ENCODE measurements at regions of chr1 and their contacts with region 1.

Region 1: GRCh38 chr1:205300886-205301821 is 20.4 kb downstream of the NUAK2 start:
- DNase-seq: peak; percentile 81
- H3K4me3 ChIP-seq: peak overlapping the region in 1 of 3 experiments; percentile 14
- H3K27ac ChIP-seq: peak overlapping the region; percentile 46
- H3K4me1 ChIP-seq: peaks cover 49% of the 10 kb centered on the region
- H3K27me3 ChIP-seq: no peaks in the 10 kb centered on the region
- CTCF ChIP-seq: no peak

Region 2: DNA sequence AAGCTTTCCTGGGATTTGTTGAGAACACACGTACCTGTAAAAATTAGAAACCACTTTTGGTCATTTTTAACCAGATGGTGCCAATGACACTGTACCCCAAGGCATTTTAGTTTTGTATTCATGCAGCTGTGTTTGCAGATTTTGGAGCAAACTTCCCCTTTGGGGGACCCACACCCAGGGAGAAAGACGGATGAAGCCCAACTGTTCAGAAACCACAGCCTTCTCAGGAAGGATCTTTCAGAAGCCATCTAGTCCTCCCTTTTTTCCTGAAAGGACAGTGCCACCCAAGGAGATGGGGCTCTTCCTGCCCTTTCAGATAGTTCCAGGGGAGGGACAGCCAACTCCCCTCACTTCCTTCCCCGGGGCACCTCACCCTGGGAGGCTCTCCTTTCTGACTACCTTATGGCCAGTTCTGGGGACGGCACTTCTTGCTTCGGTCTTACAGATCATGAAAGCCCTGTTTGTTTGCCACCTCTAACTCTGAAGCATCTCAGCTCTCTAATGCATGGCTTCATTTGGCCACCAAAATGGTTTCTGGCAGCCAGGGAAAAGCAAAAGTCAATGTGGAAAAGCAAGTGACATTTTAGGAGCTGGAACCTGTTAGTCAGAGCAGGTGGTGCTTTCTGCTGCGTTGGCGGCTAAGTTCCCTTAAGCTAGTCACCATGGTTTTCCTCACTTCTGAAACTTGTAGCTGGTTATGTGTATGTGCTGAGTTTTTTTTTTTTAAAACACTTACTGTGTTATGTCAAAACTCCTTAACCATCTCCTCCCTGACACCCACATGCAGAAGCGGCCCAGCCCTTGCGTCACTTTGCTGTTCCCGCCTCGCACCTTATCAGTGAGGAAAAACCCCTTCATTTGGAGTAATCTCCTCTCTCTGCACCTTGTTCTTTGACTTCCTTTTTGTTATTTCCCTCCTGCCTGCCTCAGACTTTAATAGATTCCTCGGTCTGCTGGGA is 63.3 kb before region 1 on chr1:
- CTCF ChIA-PET with region 1: no interaction called
- dilution Hi-C with region 1: no loop called
- in situ Hi-C with region 1: no loop called
- intact Hi-C with region 1: no loop called
- DNase-seq: no peak
- H3K4me3 ChIP-seq: no peak overlapping the region
- H3K27ac ChIP-seq: no peak overlapping the region
- H3K4me1 ChIP-seq: no peaks in the 10 kb centered on the region
- H3K27me3 ChIP-seq: no peaks in the 10 kb centered on the region
- CTCF ChIP-seq: no peak

Region 3: DNA sequence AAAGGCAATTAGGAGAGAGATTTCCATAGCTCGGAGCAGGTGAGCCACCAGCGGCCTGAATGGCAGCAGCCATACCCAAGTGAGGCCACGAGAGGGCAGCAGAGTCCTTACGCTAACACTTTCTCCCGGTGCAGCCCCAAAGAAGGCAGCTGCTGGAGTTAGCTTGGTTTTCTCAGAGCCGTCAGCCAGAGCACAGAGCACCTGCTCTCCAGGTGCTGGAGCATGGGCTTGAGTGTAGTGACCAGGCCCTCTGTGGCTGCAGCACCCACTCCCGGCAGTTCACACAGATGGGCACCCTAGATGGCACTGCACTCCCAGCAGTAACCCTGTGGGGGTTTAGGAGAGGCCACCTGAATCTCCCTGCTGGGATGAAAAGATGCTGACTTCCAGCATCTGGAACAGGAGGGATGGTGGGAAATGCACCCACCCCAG is 27.6 kb before region 1 on chr1:
- CTCF ChIA-PET with region 1: interaction called, 5 read pairs
- dilution Hi-C with region 1: no loop called
- in situ Hi-C with region 1: no loop called
- intact Hi-C with region 1: loop called (anchors 1 kb)
- DNase-seq: peak; percentile 65
- H3K4me3 ChIP-seq: no peak overlapping the region
- H3K27ac ChIP-seq: no peak overlapping the region
- H3K4me1 ChIP-seq: peaks cover 29% of the 10 kb centered on the region
- H3K27me3 ChIP-seq: no peaks in the 10 kb centered on the region
- CTCF ChIP-seq: peak; percentile 99

Region 4: GRCh38 chr1:205284343-205285144 is 16.6 kb before region 1 on chr1:
- CTCF ChIA-PET with region 1: no interaction called
- dilution Hi-C with region 1: no loop called
- in situ Hi-C with region 1: no loop called
- intact Hi-C with region 1: loop called (anchors 1 kb)
- DNase-seq: peak; percentile 100
- H3K4me3 ChIP-seq: no peak overlapping the region
- H3K27ac ChIP-seq: peak overlapping the region; percentile 26
- H3K4me1 ChIP-seq: peaks cover 48% of the 10 kb centered on the region
- H3K27me3 ChIP-seq: no peaks in the 10 kb centered on the region
- CTCF ChIP-seq: peak in 1 of 2 donors; percentile 25

Region 5: DNA sequence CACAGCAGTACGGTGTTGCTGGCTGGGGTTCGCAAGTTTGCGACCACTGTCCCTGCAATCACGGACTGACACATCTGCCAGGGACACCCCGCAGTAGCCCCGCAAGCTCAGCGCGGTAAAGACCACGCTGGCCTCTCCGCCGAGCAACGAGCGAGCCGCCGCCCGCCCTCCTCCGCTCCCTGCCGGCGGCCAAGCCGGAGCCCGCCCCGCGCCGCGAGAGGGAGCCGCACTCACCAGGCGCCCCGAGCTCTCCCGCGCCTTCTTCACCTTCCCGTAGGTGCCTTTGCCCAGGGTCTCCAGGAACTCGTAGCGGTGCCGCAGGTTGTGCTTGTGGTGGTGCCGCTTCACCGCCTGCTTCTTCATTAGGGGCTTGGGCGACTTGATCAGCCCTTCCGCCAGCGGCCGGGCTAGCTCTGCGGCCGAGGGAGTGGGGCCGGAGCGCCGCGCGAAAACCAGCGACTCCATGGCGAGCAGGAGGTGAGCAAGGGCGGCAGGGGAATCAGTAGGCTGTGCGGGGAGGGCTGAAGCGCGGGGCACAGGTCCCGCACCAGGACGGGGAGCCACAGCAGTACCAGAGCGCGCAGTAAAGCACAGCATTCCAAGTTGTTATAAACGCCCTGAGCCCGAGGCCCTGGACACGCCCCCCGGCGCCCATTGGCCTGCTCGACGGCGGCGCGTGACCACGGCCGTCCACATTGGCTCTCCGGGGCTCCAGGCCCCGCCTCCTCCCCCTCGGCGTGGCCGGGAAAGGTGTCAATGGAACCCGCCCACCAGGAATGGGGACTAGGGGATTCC is 20.2 kb after region 1 on chr1 and contains the start of gene NUAK2:
- CTCF ChIA-PET with region 1: no interaction called
- dilution Hi-C with region 1: no loop called
- in situ Hi-C with region 1: no loop called
- intact Hi-C with region 1: loop called (anchors 1 kb)
- DNase-seq: peak; percentile 88
- H3K4me3 ChIP-seq: peak within 1 kb of the TSS; percentile 58 to 92 (median 87)
- H3K27ac ChIP-seq: peak within 1 kb of the TSS; percentile 24
- H3K4me1 ChIP-seq: peaks cover 48% of the 10 kb centered on the region
- H3K27me3 ChIP-seq: no peaks in the 10 kb centered on the region
- CTCF ChIP-seq: peak in 1 of 2 donors; percentile 42
- total RNA-seq, gene NUAK2: 11.8 TPM

Region 6: GRCh38 chr1:206883876-206884275 is 1582.7 kb after region 1 on chr1:
- CTCF ChIA-PET with region 1: interaction called, 12 read pairs
- dilution Hi-C with region 1: no loop called
- in situ Hi-C with region 1: no loop called
- intact Hi-C with region 1: no loop called
- DNase-seq: no peak
- H3K4me3 ChIP-seq: no peak overlapping the region
- H3K27ac ChIP-seq: no peak overlapping the region
- H3K4me1 ChIP-seq: peaks cover 20% of the 10 kb centered on the region
- H3K27me3 ChIP-seq: no peaks in the 10 kb centered on the region
- CTCF ChIP-seq: no peak

Measured in mammary epithelial cell (primary cell).